Sciatic nerve (tissue), 2 donors: ENCODE measurements at regions of chr16 and their contacts with region 1.

Region 1: GRCh38 chr16:65024767-65025178 is 97.1 kb downstream of the CDH11 start:
- DNase-seq: no peak
- ATAC-seq: no peak

Region 2: GRCh38 chr16:65947951-65948350 is 923.2 kb after region 1 on chr16:
- intact Hi-C with region 1: loop called (anchors 5 kb)
- DNase-seq: no peak
- ATAC-seq: no peak